Mammary epithelial cell (primary cell): ENCODE measurements at regions of chr19 and their contacts with region 1.

Region 1: GRCh38 chr19:49640113-49640898 is at the start of gene RRAS:
- DNase-seq: peak; percentile 100
- H3K4me3 ChIP-seq: peak within 1 kb of the TSS; percentile 56 to 87 (median 61)
- H3K27ac ChIP-seq: peak within 1 kb of the TSS; percentile 100
- H3K4me1 ChIP-seq: peaks cover 27% of the 10 kb centered on the region
- H3K27me3 ChIP-seq: no peaks in the 10 kb centered on the region
- CTCF ChIP-seq: no peak
- total RNA-seq, gene RRAS: 20.5 to 84.2 TPM

Region 2: DNA sequence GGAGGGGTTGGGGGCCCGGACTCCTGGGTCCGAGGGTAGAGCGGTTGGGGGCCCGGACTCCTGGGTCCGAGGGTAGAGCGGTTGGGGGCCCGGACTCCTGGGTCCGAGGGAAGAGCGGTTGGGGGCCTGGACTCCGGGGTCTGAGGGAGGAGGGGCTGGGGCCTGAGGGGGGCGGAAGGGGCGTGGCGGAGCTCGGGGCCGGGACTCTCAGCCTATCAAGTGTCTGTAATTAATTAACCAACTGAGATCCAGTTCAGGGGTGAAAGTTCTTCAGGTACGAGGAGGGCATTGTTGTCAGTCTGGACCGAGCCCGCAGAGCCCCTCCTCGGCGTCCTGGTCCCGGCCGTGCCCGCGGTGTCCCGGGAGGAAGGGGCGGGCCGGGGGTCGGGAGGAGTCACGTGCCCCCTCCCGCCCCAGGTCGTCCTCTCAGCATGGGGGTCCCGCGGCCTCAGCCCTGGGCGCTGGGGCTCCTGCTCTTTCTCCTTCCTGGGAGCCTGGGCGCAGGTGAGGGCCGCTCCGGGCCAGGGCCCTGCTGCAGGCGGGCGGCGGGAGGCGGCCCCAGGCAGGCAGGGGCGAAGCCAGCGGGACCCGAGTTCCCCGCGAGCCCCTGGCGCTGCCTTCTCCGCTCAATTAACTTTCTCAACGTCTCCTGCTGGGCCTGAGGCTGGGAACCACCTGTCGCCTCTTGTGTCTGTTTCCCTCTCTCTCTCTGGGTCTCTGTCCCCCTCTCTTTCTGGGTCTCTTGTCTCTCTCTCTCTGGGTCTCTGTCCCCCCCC is 127.1 kb before region 1 on chr19:
- CTCF ChIA-PET with region 1: no interaction called
- dilution Hi-C with region 1: loop called (anchors 5 kb)
- in situ Hi-C with region 1: no loop called
- intact Hi-C with region 1: no loop called
- DNase-seq: no peak
- H3K4me3 ChIP-seq: peak overlapping the region in 2 of 3 experiments; percentile 32 to 36
- H3K27ac ChIP-seq: no peak overlapping the region
- H3K4me1 ChIP-seq: peaks cover 7% of the 10 kb centered on the region
- H3K27me3 ChIP-seq: peaks cover 4% of the 10 kb centered on the region
- CTCF ChIP-seq: no peak

Region 3: GRCh38 chr19:49590071-49590970 is 50.0 kb before region 1 on chr19:
- CTCF ChIA-PET with region 1: no interaction called
- dilution Hi-C with region 1: no loop called
- in situ Hi-C with region 1: no loop called
- intact Hi-C with region 1: loop called (anchors 1 kb)
- DNase-seq: peak; percentile 93
- H3K4me3 ChIP-seq: peak overlapping the region; percentile 42 to 78 (median 60)
- H3K27ac ChIP-seq: peak overlapping the region; percentile 63
- H3K4me1 ChIP-seq: peaks cover 13% of the 10 kb centered on the region
- H3K27me3 ChIP-seq: no peaks in the 10 kb centered on the region
- CTCF ChIP-seq: no peak

Region 4: GRCh38 chr19:49676690-49677231 is 36.5 kb after region 1 on chr19:
- CTCF ChIA-PET with region 1: interaction called, 5 read pairs
- dilution Hi-C with region 1: loop called (anchors 5 kb)
- in situ Hi-C with region 1: no loop called
- intact Hi-C with region 1: loop called (anchors 1 kb)
- DNase-seq: peak; percentile 100
- H3K4me3 ChIP-seq: peak overlapping the region; percentile 84 to 100 (median 91)
- H3K27ac ChIP-seq: peak overlapping the region; percentile 92
- H3K4me1 ChIP-seq: peaks cover 25% of the 10 kb centered on the region
- H3K27me3 ChIP-seq: no peaks in the 10 kb centered on the region
- CTCF ChIP-seq: no peak

Region 5: GRCh38 chr19:49817964-49818648 is 177.8 kb after region 1 on chr19 and contains the start of gene MED25:
- CTCF ChIA-PET with region 1: no interaction called
- dilution Hi-C with region 1: loop called (anchors 5 kb)
- in situ Hi-C with region 1: no loop called
- intact Hi-C with region 1: no loop called
- DNase-seq: peak; percentile 78
- H3K4me3 ChIP-seq: peak within 1 kb of the TSS; percentile 68 to 94 (median 93)
- H3K27ac ChIP-seq: peak within 1 kb of the TSS; percentile 99
- H3K4me1 ChIP-seq: peaks cover 6% of the 10 kb centered on the region
- H3K27me3 ChIP-seq: no peaks in the 10 kb centered on the region
- CTCF ChIP-seq: peak in 1 of 2 donors; percentile 26
- total RNA-seq, gene MED25: 18.3 to 51.8 TPM